Activated naive CD4-positive, alpha-beta T cell treated with anti-CD3 and anti-CD28 coated beads for 36 hours (primary cell): ENCODE measurements at regions of chr1 and their contacts with region 1.

Region 1: DNA sequence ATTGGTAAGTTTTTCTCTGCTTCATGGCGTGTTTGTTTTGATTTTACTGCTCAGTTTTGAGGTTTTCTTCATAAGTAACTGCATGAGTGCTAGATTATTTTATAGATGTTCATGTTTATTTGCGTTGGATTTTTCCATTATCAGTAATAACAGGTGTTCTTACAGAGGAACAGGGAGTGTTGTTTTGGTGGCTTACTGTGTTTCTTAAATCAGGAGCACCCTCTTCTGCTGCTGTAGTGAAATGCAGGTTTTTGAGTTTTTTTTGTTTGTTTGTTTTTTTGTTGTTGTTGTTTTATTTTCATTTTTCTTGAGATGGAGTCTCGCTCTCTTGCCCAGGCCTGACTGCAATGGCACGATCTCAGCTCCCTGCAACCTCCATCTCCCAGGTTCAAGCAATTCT is 32.6 kb downstream of the CTBS start:
- DNase-seq: no peak
- H3K4me3 Mint-ChIP-seq: no peak overlapping the region
- H3K27ac Mint-ChIP-seq: no peak overlapping the region
- H3K4me1 Mint-ChIP-seq: peaks cover 12% of the 10 kb centered on the region
- H3K27me3 Mint-ChIP-seq: no peaks in the 10 kb centered on the region

Region 2: GRCh38 chr1:83931658-83932253 is 609.9 kb before region 1 on chr1:
- CTCF ChIA-PET with region 1: no interaction called
- intact Hi-C with region 1: loop called (anchors 10 kb)
- DNase-seq: peak; percentile 24
- H3K4me3 Mint-ChIP-seq: no peak overlapping the region
- H3K27ac Mint-ChIP-seq: no peak overlapping the region
- H3K4me1 Mint-ChIP-seq: no peaks in the 10 kb centered on the region
- H3K27me3 Mint-ChIP-seq: peaks cover 8% of the 10 kb centered on the region

Region 3: GRCh38 chr1:85091671-85092280 is 550.1 kb after region 1 on chr1:
- CTCF ChIA-PET with region 1: no interaction called
- intact Hi-C with region 1: no loop called
- DNase-seq: peak; percentile 43
- H3K4me3 Mint-ChIP-seq: peak overlapping the region; percentile 66
- H3K27ac Mint-ChIP-seq: no peak overlapping the region
- H3K4me1 Mint-ChIP-seq: peaks cover 8% of the 10 kb centered on the region
- H3K27me3 Mint-ChIP-seq: peaks cover 2% of the 10 kb centered on the region